ENCODE measurements at regions of chr5 and their contacts with region 1.

Region 1: GRCh38 chr5:154937718-154938466 is at the start of gene GEMIN5:
- DNase-seq: peak; percentile 90

Region 2: DNA sequence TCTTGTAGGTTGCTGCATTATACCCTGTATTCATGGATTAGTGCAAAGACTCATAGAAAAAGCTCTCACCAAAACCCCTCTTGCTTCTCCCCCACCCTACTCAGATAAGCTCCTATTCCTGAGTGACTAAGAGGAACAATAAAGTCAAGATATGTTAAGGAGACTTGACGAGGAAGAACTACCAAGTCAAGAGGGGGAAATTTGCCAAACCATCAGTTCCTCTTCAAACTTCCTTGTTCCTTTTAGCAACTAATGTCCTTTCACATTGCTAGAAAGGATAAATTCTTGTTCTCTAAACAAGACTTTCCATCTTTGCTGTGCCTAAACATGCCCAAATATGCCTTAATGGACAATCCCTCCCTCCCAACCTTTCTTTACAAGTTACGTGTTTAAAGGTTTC is 52.5 kb before region 1 on chr5:
- CTCF ChIA-PET with region 1: no interaction called
- POLR2A ChIA-PET with region 1: no interaction called
- DNase-seq: no peak

Region 3: DNA sequence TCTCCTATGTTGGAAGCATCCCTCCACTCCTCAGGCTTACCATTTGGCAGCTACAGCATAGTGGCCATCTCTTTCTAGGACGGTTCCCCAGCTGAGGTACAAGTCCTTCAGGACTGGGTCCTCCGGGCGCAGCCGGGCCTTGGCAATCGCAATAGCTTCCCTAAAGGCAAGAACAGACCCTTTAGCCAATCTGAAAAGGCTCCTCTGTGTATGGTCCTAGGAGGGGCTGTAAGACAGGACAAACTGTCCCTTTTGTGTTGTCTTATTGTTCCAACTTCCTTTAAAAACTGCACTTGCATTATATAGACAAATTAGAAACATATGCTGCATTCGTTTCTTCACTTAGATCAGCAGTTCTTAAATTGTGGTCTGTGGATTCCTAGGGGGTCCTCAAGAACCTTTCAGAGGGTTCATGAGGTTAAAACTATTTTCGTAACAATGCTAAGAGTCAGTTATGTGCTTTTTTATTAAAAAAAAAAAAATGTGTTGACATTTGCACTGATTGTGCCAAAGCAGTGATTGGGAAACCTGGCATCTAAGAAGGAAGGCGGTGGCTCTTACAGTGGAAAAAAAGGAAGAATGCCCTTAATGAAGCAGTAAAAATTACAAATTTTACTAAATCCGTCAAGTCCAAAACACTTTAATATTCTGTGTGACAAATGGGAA is 38.6 kb before region 1 on chr5:
- CTCF ChIA-PET with region 1: no interaction called
- POLR2A ChIA-PET with region 1: no interaction called
- DNase-seq: no peak

Region 4: DNA sequence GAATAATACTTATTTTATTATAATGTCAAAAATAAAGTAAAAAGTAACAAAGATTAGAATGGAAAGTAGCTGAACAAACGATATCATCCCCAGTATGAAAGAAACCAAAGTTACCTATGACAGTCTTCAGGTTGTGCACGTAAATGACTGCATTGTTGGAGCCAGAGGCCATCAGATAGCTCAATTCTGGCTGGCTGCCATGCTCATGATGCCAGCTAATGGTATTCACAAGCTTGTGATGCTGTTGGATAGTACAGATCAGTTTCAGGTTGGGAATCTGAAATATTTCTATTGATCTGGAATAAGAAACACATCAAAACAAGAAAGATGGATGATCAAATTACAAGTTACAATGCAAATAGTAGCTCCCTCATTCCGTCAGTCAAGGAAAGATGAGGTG is 21.0 kb before region 1 on chr5:
- CTCF ChIA-PET with region 1: no interaction called
- POLR2A ChIA-PET with region 1: interaction called, 14 read pairs
- DNase-seq: no peak

Region 5: GRCh38 chr5:154977409-154977808 is 39.5 kb after region 1 on chr5:
- CTCF ChIA-PET with region 1: no interaction called
- POLR2A ChIA-PET with region 1: no interaction called
- DNase-seq: no peak